Breast epithelium (tissue), 4 donors: ENCODE measurements at regions of chr21 and their contacts with region 1.

Region 1: DNA sequence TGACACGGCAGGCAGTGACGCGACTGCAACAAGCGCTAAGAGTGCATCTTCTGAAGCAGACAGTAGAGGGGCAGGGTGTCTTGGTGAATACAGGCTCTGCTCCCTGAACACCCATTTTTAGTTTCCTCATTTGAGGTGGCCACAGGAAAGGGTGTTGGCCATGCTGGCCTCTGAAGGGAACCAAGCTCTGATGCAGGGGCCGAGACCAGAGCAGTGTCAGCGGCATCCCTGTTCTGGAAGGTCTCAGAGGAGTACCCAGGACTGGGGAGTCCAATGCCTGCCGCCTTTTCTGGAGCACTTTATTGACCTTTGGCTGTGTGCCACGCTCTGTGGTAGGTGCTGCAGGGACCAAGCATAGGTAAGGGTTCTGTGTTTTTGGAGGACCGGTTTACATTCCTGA is 100.4 kb downstream of the KCNJ6 start:
- DNase-seq: no peak
- H3K4me3 ChIP-seq: no peak overlapping the region
- H3K27ac ChIP-seq: no peak overlapping the region
- H3K4me1 ChIP-seq: no peaks in the 10 kb centered on the region
- H3K27me3 ChIP-seq: no peaks in the 10 kb centered on the region
- CTCF ChIP-seq: no peak
- POLR2A ChIP-seq: no peak

Region 2: GRCh38 chr21:37891972-37892371 is 76.1 kb after region 1 on chr21:
- intact Hi-C with region 1: loop called (anchors 2 kb)
- DNase-seq: no peak
- H3K4me3 ChIP-seq: no peak overlapping the region
- H3K27ac ChIP-seq: no peak overlapping the region
- H3K4me1 ChIP-seq: no peaks in the 10 kb centered on the region
- H3K27me3 ChIP-seq: peaks cover 0 to 24% of the 10 kb centered on the region in 2 donors
- CTCF ChIP-seq: no peak
- POLR2A ChIP-seq: no peak